ENCODE measurements at regions of chr6 and their contacts with region 1.

Region 1: GRCh38 chr6:163956571-163957407 is 542.3 kb downstream of the QKI start:
- DNase-seq: peak; percentile 37
- H3K4me3 ChIP-seq: no peak overlapping the region
- H3K27ac ChIP-seq: no peak overlapping the region
- H3K27me3 ChIP-seq: no peaks in the 10 kb centered on the region
- CTCF ChIP-seq: peak; percentile 94

Region 2: GRCh38 chr6:163416557-163417253 is 540.1 kb before region 1 on chr6:
- CTCF ChIA-PET with region 1: interaction called, 19 read pairs
- POLR2A ChIA-PET with region 1: no interaction called
- DNase-seq: peak; percentile 72
- H3K4me3 ChIP-seq: peak overlapping the region; percentile 91
- H3K27ac ChIP-seq: peak overlapping the region; percentile 84
- H3K27me3 ChIP-seq: no peaks in the 10 kb centered on the region
- CTCF ChIP-seq: peak; percentile 61

Region 3: DNA sequence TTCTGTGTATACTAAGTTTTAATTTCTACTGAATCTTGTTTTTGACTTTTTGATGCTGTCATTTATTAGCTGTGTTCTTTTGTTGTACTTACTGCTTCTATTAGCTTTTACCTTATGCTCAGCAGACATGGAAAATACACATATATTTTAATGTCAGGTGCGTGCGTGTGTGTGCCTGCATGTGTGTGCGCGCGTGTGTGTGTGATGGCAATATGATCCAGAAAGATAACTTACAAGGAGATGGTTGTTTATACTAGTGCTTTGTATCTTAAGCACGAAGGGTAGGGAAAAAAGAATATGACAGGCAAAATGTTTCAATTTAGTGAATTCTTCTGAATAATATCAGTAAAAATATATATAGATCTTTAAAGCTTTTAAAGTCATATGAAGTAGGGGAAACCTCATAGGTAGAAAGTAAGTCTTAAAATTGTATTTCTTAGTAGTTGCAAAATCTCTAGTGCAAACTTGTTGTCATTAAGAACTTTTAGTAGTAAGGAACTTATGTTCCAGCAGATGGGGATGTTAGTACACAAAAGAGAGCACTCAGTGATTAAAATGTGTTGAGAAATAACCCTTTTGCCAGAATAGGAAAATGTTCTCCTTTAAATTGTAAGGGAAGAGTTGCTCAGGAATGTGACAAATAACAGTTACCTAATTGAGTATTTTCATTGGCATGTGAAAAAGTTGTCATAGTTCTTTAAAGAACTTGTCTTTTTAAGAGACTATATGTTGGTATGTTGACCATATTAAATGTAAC is 529.1 kb before region 1 on chr6:
- CTCF ChIA-PET with region 1: interaction called, 34 read pairs
- POLR2A ChIA-PET with region 1: no interaction called
- DNase-seq: peak; percentile 44
- H3K4me3 ChIP-seq: no peak overlapping the region
- H3K27ac ChIP-seq: no peak overlapping the region
- H3K27me3 ChIP-seq: no peaks in the 10 kb centered on the region
- CTCF ChIP-seq: peak; percentile 48

Region 4: DNA sequence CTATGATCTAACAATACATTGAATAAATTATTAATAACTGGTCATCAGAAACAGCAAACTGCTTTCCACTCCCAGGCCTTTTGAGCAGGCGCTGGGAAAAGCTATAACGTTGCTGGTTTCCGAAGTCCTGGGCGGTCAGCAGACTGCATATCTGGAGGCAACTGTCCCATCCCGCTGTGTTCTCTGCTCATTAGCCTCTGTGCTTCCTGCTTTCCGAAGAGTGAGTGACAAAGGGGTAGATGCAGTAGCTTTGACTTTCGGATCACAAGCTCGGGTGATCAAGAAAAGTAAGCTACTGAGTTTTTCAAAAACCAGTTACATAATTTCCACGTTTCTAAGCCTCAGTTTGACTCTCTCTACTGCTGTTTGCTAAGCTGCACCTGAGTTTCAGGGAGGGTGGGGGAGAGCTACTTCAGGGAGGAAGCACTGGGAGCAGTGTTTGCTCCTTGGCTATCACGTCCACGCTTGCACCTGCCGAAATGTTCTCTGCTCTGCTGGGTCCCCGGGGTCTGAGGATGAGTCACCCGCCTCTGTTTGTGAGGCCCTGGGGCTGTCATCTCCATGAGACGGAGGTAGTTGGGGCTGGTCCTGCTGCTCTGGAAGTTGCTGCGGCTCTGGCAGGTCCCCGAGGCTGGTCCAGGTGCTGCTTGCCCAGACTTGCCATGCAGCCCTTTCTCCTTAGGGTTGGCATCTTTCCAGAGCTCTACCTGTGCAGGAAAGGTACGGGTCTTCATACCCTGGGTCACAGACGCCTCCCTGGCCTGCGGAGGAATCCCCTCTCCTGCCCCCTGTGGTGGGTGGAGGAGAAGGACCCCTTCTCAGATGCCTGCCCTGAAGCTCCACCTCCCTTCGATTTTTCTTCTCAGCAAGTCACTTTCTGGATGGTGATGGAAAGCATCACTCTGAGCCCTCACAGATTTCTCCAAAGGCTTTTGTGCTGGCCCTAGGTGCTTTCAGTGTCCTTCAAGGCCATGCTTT is 322.3 kb before region 1 on chr6:
- CTCF ChIA-PET with region 1: no interaction called
- POLR2A ChIA-PET with region 1: no interaction called
- DNase-seq: no peak
- H3K4me3 ChIP-seq: no peak overlapping the region
- H3K27ac ChIP-seq: no peak overlapping the region
- H3K27me3 ChIP-seq: peaks cover 3% of the 10 kb centered on the region
- CTCF ChIP-seq: no peak

Region 5: DNA sequence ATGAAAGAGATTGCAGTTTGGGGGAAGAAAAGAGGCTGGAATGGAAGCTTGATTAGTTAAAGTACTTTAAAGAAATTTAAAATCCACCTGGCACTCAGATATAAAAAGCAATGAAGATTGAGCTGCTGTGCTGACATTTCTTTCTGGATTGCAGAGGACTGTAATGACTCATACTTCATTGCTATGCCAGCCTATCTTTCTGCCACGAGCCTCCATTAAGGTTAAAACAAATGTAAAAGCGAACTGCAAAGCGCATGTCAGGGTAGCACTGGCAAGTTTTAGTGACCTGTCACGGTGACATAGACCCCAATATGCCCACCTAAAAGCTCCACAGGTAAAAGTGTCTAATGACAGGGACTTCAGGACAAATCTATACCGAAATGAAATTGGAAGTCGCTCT is 903.0 kb after region 1 on chr6:
- CTCF ChIA-PET with region 1: no interaction called
- POLR2A ChIA-PET with region 1: no interaction called
- DNase-seq: no peak
- H3K4me3 ChIP-seq: no peak overlapping the region
- H3K27ac ChIP-seq: no peak overlapping the region
- H3K27me3 ChIP-seq: no peaks in the 10 kb centered on the region
- CTCF ChIP-seq: no peak

Measured in AG04450 (cell line).